Naive thymus-derived CD4-positive, alpha-beta T cell (primary cell): ENCODE measurements at regions of chr6 and their contacts with region 1.

Region 1: GRCh38 chr6:34236131-34236996 is at the start of gene HMGA1:
- DNase-seq: peak; percentile 74 to 91 (median 83)
- ATAC-seq: peak; percentile 84
- H3K4me3 ChIP-seq: peak within 1 kb of the TSS; percentile 66
- H3K4me3 Mint-ChIP-seq: peak within 1 kb of the TSS; percentile 88 to 96 (median 94)
- H3K27ac ChIP-seq: peak within 1 kb of the TSS; percentile 99
- H3K27ac Mint-ChIP-seq: peak within 1 kb of the TSS; percentile 89 to 99 (median 98)
- H3K4me1 ChIP-seq: peaks cover 13 to 15% of the 10 kb centered on the region in 2 donors
- H3K4me1 Mint-ChIP-seq: peaks cover 16 to 43% (median 34%) of the 10 kb centered on the region in 7 donors
- H3K27me3 ChIP-seq: no peaks in the 10 kb centered on the region
- H3K27me3 Mint-ChIP-seq: no peaks in the 10 kb centered on the region
- total RNA-seq, gene HMGA1: 90.0 to 180 (median 95.3) TPM

Region 2: GRCh38 chr6:33317669-33318425 is 918.5 kb before region 1 on chr6 and contains the start of gene ZBTB22:
- CTCF ChIA-PET with region 1: no interaction called
- POLR2A ChIA-PET with region 1: no interaction called
- intact Hi-C with region 1: loop called in 1 of 2 experiments (anchors 10 kb)
- DNase-seq: peak; percentile 87 to 97 (median 96)
- ATAC-seq: peak; percentile 73
- H3K4me3 ChIP-seq: peak within 1 kb of the TSS; percentile 97
- H3K4me3 Mint-ChIP-seq: peak within 1 kb of the TSS; percentile 81 to 100 (median 100)
- H3K27ac ChIP-seq: peak within 1 kb of the TSS; percentile 99
- H3K27ac Mint-ChIP-seq: peak within 1 kb of the TSS; percentile 97 to 99 (median 98)
- H3K4me1 ChIP-seq: peaks cover 59 to 62% of the 10 kb centered on the region in 2 donors
- H3K4me1 Mint-ChIP-seq: peaks cover 53 to 85% (median 75%) of the 10 kb centered on the region in 7 donors
- H3K27me3 ChIP-seq: no peaks in the 10 kb centered on the region
- H3K27me3 Mint-ChIP-seq: peaks cover 0 to 2% (median 0%) of the 10 kb centered on the region in 5 donors
- total RNA-seq, gene ZBTB22: 15.5 to 30.1 (median 20.5) TPM

Region 3: GRCh38 chr6:33620856-33621710 is 615.3 kb before region 1 on chr6 and contains the start of gene ITPR3:
- CTCF ChIA-PET with region 1: no interaction called
- POLR2A ChIA-PET with region 1: no interaction called
- intact Hi-C with region 1: loop called in 1 of 2 experiments (anchors 10 kb)
- DNase-seq: peak; percentile 63 to 83 (median 80)
- ATAC-seq: peak; percentile 94
- H3K4me3 ChIP-seq: peak within 1 kb of the TSS; percentile 80
- H3K4me3 Mint-ChIP-seq: peak within 1 kb of the TSS; percentile 91 to 97 (median 96)
- H3K27ac ChIP-seq: peak within 1 kb of the TSS; percentile 97
- H3K27ac Mint-ChIP-seq: peak within 1 kb of the TSS; percentile 82 to 96 (median 94)
- H3K4me1 ChIP-seq: peaks cover 9 to 35% of the 10 kb centered on the region in 2 donors
- H3K4me1 Mint-ChIP-seq: peaks cover 29 to 74% (median 66%) of the 10 kb centered on the region in 7 donors
- H3K27me3 ChIP-seq: no peaks in the 10 kb centered on the region
- H3K27me3 Mint-ChIP-seq: peaks cover 0 to 2% (median 0%) of the 10 kb centered on the region in 5 donors
- total RNA-seq, gene ITPR3: 35.6 to 65.7 (median 47.7) TPM

Region 4: GRCh38 chr6:34182751-34183531 is 53.4 kb before region 1 on chr6:
- CTCF ChIA-PET with region 1: no interaction called
- POLR2A ChIA-PET with region 1: interaction called, 7 read pairs
- intact Hi-C with region 1: loop called in 1 of 2 experiments (anchors 5 kb)
- DNase-seq: peak in 8 of 9 donors; percentile 52 to 81 (median 72)
- ATAC-seq: peak; percentile 95
- H3K4me3 ChIP-seq: peak overlapping the region; percentile 47
- H3K4me3 Mint-ChIP-seq: peak overlapping the region; percentile 43 to 80 (median 67)
- H3K27ac ChIP-seq: peak overlapping the region; percentile 45
- H3K27ac Mint-ChIP-seq: peak overlapping the region; percentile 55 to 90 (median 85)
- H3K4me1 ChIP-seq: peaks cover 23 to 28% of the 10 kb centered on the region in 2 donors
- H3K4me1 Mint-ChIP-seq: peaks cover 17 to 47% (median 34%) of the 10 kb centered on the region in 7 donors
- H3K27me3 ChIP-seq: no peaks in the 10 kb centered on the region
- H3K27me3 Mint-ChIP-seq: peaks cover 0 to 3% (median 0%) of the 10 kb centered on the region in 5 donors

Region 5: GRCh38 chr6:34248727-34249551 is 12.6 kb after region 1 on chr6 and contains the start of gene SMIM29:
- CTCF ChIA-PET with region 1: interaction called, 5 read pairs
- POLR2A ChIA-PET with region 1: interaction called, 44 read pairs
- intact Hi-C with region 1: loop called (anchors 1 kb)
- DNase-seq: peak; percentile 95 to 100 (median 97)
- ATAC-seq: peak; percentile 94
- H3K4me3 ChIP-seq: peak within 1 kb of the TSS; percentile 87
- H3K4me3 Mint-ChIP-seq: peak within 1 kb of the TSS; percentile 85 to 98 (median 94)
- H3K27ac ChIP-seq: peak within 1 kb of the TSS; percentile 95
- H3K27ac Mint-ChIP-seq: peak within 1 kb of the TSS; percentile 85 to 97 (median 95)
- H3K4me1 ChIP-seq: peaks cover 13 to 15% of the 10 kb centered on the region in 2 donors
- H3K4me1 Mint-ChIP-seq: peaks cover 13 to 42% (median 26%) of the 10 kb centered on the region in 7 donors
- H3K27me3 ChIP-seq: no peaks in the 10 kb centered on the region
- H3K27me3 Mint-ChIP-seq: peaks cover 0 to 10% (median 0%) of the 10 kb centered on the region in 5 donors
- total RNA-seq, gene SMIM29: 13.9 to 24.2 (median 22.5) TPM

Region 6: DNA sequence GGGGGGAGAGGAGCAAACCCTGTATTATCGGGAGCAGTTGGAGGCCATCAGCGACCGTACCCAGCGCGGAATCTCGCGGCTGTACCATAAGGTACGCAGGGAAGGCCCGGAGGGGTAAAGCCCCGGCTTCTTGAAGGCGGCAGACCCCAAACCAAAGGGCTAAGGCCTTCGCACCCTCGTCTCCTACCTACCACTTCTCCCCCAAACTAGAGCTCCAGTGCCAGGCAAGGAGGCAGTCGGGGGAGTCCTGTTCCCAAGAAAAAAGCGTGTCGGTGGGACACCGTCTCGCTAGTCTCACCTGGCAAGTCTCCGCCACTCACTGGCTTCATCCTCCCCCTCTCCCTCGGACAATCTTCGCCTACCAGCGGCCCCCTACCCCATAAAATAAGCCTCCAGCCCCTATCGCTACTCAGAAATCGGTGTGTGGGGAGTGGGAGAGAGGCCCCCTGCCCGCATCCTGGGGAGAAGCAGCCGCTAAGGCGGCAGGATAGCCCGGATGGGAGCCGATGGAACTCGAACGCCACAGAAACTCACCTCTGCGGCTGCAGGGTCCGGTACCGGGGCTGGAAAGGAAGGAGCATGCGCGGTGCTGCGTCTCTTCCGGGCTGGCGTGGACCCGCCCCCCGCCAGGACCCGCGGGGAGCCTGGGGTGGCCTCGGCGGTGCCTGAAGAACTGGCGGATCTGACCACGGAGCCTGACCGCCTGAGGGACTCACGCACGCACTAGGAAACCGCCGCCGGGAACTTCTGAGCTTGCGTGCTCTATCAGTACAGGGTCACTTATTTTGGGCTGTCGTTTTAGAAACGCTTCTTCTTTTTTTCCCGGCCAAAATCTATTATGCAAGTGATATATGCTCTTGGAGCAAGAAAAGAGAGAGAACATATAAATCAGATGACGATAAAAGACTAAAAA is 189.4 kb after region 1 on chr6 and contains the start of gene RPS10:
- CTCF ChIA-PET with region 1: no interaction called
- POLR2A ChIA-PET with region 1: interaction called, 6 read pairs
- intact Hi-C with region 1: loop called in 1 of 2 experiments (anchors 1 kb)
- DNase-seq: peak; percentile 80 to 94 (median 88)
- ATAC-seq: peak; percentile 100
- H3K4me3 ChIP-seq: peak within 1 kb of the TSS; percentile 98
- H3K4me3 Mint-ChIP-seq: peak within 1 kb of the TSS; percentile 93 to 99 (median 97)
- H3K27ac ChIP-seq: peak within 1 kb of the TSS; percentile 93
- H3K27ac Mint-ChIP-seq: peak within 1 kb of the TSS; percentile 95 to 99 (median 98)
- H3K4me1 ChIP-seq: peaks cover 7 to 18% of the 10 kb centered on the region in 2 donors
- H3K4me1 Mint-ChIP-seq: peaks cover 13 to 43% (median 31%) of the 10 kb centered on the region in 7 donors
- H3K27me3 ChIP-seq: no peaks in the 10 kb centered on the region
- H3K27me3 Mint-ChIP-seq: peaks cover 0 to 3% (median 0%) of the 10 kb centered on the region in 5 donors
- total RNA-seq, gene RPS10: 1,466 to 3,151 (median 2,905) TPM

Region 7: DNA sequence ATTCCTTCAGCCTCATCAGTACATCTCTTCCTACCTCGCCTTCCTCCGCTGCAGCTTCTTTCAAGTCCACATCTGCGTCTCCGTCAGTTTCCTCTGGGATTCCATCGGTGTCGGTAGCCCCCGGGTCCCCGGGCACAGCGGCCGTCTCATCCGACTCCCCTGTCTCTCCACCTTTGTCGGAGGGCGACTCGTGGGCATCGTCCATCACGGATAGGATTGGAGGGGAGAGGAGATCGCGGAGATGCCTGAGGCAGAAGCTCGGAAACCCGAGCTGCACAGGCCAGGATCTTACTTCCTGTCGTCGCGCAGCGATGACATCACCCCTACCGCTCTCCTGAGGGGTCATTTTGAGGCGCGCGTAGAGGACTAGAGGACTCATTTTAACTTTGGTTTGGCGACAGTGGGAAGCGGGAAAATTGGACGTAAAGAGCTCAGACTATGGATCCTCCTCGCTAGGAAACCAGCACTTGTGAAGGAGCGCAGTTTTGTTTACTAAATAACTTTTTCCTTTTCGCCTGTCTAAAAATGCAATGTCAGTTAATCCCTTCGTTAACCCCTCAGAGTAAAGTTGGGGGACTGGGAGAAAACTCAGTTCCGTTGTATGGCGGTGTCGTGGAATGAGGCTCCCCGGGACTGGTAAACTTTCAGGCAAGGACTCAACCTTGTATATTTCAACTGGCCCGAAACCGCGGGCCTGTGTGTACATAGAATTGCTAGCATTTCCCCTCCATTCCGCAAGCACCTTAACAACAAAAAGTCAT is 651.6 kb after region 1 on chr6 and contains the start of gene TAF11:
- CTCF ChIA-PET with region 1: no interaction called
- POLR2A ChIA-PET with region 1: interaction called, 3 read pairs
- intact Hi-C with region 1: loop called (anchors 5 kb)
- DNase-seq: peak; percentile 73 to 91 (median 88)
- ATAC-seq: peak; percentile 80
- H3K4me3 ChIP-seq: peak within 1 kb of the TSS; percentile 94
- H3K4me3 Mint-ChIP-seq: peak within 1 kb of the TSS; percentile 92 to 100 (median 100)
- H3K27ac ChIP-seq: peak within 1 kb of the TSS; percentile 95
- H3K27ac Mint-ChIP-seq: peak within 1 kb of the TSS; percentile 99 to 100 (median 100)
- H3K4me1 ChIP-seq: peaks cover 15 to 18% of the 10 kb centered on the region in 2 donors
- H3K4me1 Mint-ChIP-seq: peaks cover 41 to 71% (median 58%) of the 10 kb centered on the region in 7 donors
- H3K27me3 ChIP-seq: no peaks in the 10 kb centered on the region
- H3K27me3 Mint-ChIP-seq: peaks cover 0 to 16% (median 0%) of the 10 kb centered on the region in 5 donors
- total RNA-seq, gene TAF11: 25.4 to 35.1 (median 29.4) TPM